B cell (primary cell): ENCODE measurements at regions of chr14 and their contacts with region 1.

Region 1: GRCh38 chr14:91323671-91324605 is 79.4 kb upstream of the GPR68 start:
- DNase-seq: peak; percentile 95
- ATAC-seq: peak; percentile 78
- H3K4me3 ChIP-seq: peak overlapping the region; percentile 34 to 55 (median 45)
- H3K4me3 Mint-ChIP-seq: peak overlapping the region; percentile 93
- H3K27ac ChIP-seq: peak overlapping the region; percentile 99
- H3K27ac Mint-ChIP-seq: peak overlapping the region; percentile 100
- H3K4me1 ChIP-seq: peaks cover 43 to 57% of the 10 kb centered on the region in 2 donors
- H3K4me1 Mint-ChIP-seq: peaks cover 54% of the 10 kb centered on the region
- H3K27me3 ChIP-seq: no peaks in the 10 kb centered on the region
- H3K27me3 Mint-ChIP-seq: no peaks in the 10 kb centered on the region
- CTCF ChIP-seq: peak; percentile 95

Region 2: GRCh38 chr14:91350813-91351511 is 27.0 kb after region 1 on chr14:
- CTCF ChIA-PET with region 1: interaction called, 33 read pairs
- POLR2A ChIA-PET with region 1: interaction called, 5 read pairs
- intact Hi-C with region 1: loop called (anchors 2 kb)
- DNase-seq: peak; percentile 71
- ATAC-seq: peak; percentile 61
- H3K4me3 ChIP-seq: peak overlapping the region in 4 of 5 experiments; percentile 0 to 49 (median 25)
- H3K4me3 Mint-ChIP-seq: peak overlapping the region; percentile 92
- H3K27ac ChIP-seq: peak overlapping the region; percentile 25 to 61
- H3K27ac Mint-ChIP-seq: peak overlapping the region; percentile 93
- H3K4me1 ChIP-seq: peaks cover 61 to 74% of the 10 kb centered on the region in 2 donors
- H3K4me1 Mint-ChIP-seq: peaks cover 82% of the 10 kb centered on the region
- H3K27me3 ChIP-seq: no peaks in the 10 kb centered on the region
- H3K27me3 Mint-ChIP-seq: no peaks in the 10 kb centered on the region
- CTCF ChIP-seq: no peak

Region 3: GRCh38 chr14:91373591-91374254 is 49.8 kb after region 1 on chr14:
- CTCF ChIA-PET with region 1: interaction called, 31 read pairs
- POLR2A ChIA-PET with region 1: interaction called, 5 read pairs
- intact Hi-C with region 1: loop called (anchors 2 kb)
- DNase-seq: peak; percentile 63
- ATAC-seq: peak; percentile 54
- H3K4me3 ChIP-seq: peak overlapping the region in 3 of 5 experiments; percentile 5 to 31 (median 9)
- H3K4me3 Mint-ChIP-seq: peak overlapping the region; percentile 88
- H3K27ac ChIP-seq: peak overlapping the region; percentile 73 to 80
- H3K27ac Mint-ChIP-seq: peak overlapping the region; percentile 96
- H3K4me1 ChIP-seq: peaks cover 84 to 98% of the 10 kb centered on the region in 2 donors
- H3K4me1 Mint-ChIP-seq: peaks cover 97% of the 10 kb centered on the region
- H3K27me3 ChIP-seq: no peaks in the 10 kb centered on the region
- H3K27me3 Mint-ChIP-seq: no peaks in the 10 kb centered on the region
- CTCF ChIP-seq: no peak

Region 4: GRCh38 chr14:91493169-91493568 is 169.2 kb after region 1 on chr14:
- CTCF ChIA-PET with region 1: interaction called, 3 read pairs
- POLR2A ChIA-PET with region 1: no interaction called
- intact Hi-C with region 1: loop called (anchors 5 kb)
- DNase-seq: no peak
- ATAC-seq: no peak
- H3K4me3 ChIP-seq: no peak overlapping the region
- H3K4me3 Mint-ChIP-seq: no peak overlapping the region
- H3K27ac ChIP-seq: peak overlapping the region in 1 of 2 donors; percentile 40
- H3K27ac Mint-ChIP-seq: peak overlapping the region; percentile 70
- H3K4me1 ChIP-seq: peaks cover 61 to 65% of the 10 kb centered on the region in 2 donors
- H3K4me1 Mint-ChIP-seq: peaks cover 61% of the 10 kb centered on the region
- H3K27me3 ChIP-seq: no peaks in the 10 kb centered on the region
- H3K27me3 Mint-ChIP-seq: no peaks in the 10 kb centered on the region
- CTCF ChIP-seq: no peak